Body of pancreas (tissue), 4 donors: ENCODE measurements at regions of chr2 and their contacts with region 1.

Region 1: GRCh38 chr2:174341286-174341994 is 6.7 kb downstream of the SP9 start:
- DNase-seq: peak; percentile 84 to 89 (median 88)
- ATAC-seq: peak; percentile 75
- H3K4me3 ChIP-seq: no peak overlapping the region
- H3K27ac ChIP-seq: no peak overlapping the region
- H3K4me1 ChIP-seq: peaks cover 46% of the 10 kb centered on the region
- H3K27me3 ChIP-seq: peaks cover 7 to 67% of the 10 kb centered on the region in 2 donors
- CTCF ChIP-seq: peak; percentile 90 to 99 (median 96)
- POLR2A ChIP-seq: no peak

Region 2: GRCh38 chr2:173402405-173402974 is 939.0 kb before region 1 on chr2:
- intact Hi-C with region 1: loop called (anchors 10 kb)
- DNase-seq: peak; percentile 80 to 85 (median 83)
- ATAC-seq: peak; percentile 90
- H3K4me3 ChIP-seq: no peak overlapping the region
- H3K27ac ChIP-seq: no peak overlapping the region
- H3K4me1 ChIP-seq: peaks cover 6% of the 10 kb centered on the region
- H3K27me3 ChIP-seq: no peaks in the 10 kb centered on the region
- CTCF ChIP-seq: peak; percentile 63 to 92 (median 87)
- POLR2A ChIP-seq: no peak

Region 3: DNA sequence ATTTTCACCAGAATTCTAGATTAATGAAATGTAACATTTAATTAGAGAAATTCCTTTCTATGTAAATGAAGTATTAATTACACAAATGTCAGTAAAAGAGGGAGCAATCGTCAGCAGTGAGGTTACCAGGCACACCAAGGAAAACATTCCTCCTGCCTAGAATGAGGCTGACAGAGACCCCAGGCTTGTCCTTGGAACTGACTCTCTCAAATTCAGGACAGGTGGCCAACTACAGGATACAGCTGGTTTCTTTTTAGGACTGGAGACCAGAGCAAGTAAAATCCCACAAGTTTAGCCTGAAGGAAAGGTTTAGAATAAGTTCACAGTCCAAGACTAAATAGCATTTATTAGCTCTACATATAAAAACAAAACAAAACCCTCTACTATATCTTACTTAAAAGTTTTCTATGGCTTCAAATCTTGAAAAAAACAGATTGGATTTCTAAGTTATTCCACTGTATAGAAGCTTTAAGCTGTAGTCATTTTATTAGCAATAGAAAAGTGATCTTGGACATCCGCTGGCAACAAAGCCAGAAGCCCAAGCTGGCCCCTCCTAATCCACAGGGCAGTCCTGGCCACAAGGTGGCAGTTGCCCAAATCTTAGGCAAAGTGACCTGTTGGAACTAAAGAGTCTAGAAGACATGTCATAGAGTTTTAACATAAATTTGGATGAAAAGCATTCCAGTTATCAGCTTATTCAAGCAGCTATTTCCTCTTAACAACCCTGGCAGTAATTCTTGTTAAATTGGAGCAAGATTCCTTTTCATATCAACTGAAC is 457.2 kb before region 1 on chr2:
- intact Hi-C with region 1: loop called (anchors 10 kb)
- DNase-seq: peak; percentile 70 to 82 (median 72)
- ATAC-seq: peak; percentile 60
- H3K4me3 ChIP-seq: no peak overlapping the region
- H3K27ac ChIP-seq: no peak overlapping the region
- H3K4me1 ChIP-seq: no peaks in the 10 kb centered on the region
- H3K27me3 ChIP-seq: no peaks in the 10 kb centered on the region
- CTCF ChIP-seq: peak; percentile 39 to 80 (median 70)
- POLR2A ChIP-seq: no peak

Region 4: GRCh38 chr2:174158003-174158402 is 183.4 kb before region 1 on chr2:
- intact Hi-C with region 1: loop called (anchors 10 kb)
- DNase-seq: peak; percentile 26 to 42 (median 39)
- ATAC-seq: no peak
- H3K4me3 ChIP-seq: no peak overlapping the region
- H3K27ac ChIP-seq: no peak overlapping the region
- H3K4me1 ChIP-seq: no peaks in the 10 kb centered on the region
- H3K27me3 ChIP-seq: no peaks in the 10 kb centered on the region
- CTCF ChIP-seq: peak in 5 of 7 experiments; percentile 19 to 47 (median 39)
- POLR2A ChIP-seq: no peak